Heart right ventricle (tissue), 16 donors: ENCODE measurements at regions of chr1 and their contacts with region 1.

Region 1: GRCh38 chr1:150578965-150579798 is at the start of gene MCL1:
- DNase-seq: peak; percentile 93 to 96
- ATAC-seq: peak; percentile 87 to 95 (median 90)
- H3K4me3 ChIP-seq: peak within 1 kb of the TSS; percentile 82 to 99 (median 96)
- H3K27ac ChIP-seq: peak within 1 kb of the TSS; percentile 91 to 100 (median 100)
- H3K4me1 ChIP-seq: peaks cover 0 to 46% (median 30%) of the 10 kb centered on the region in 9 donors
- H3K27me3 ChIP-seq: no peaks in the 10 kb centered on the region
- CTCF ChIP-seq: peak in 2 of 9 donors; percentile 16 to 19
- total RNA-seq, gene MCL1: 76.4 to 155 (median 122) TPM

Region 2: DNA sequence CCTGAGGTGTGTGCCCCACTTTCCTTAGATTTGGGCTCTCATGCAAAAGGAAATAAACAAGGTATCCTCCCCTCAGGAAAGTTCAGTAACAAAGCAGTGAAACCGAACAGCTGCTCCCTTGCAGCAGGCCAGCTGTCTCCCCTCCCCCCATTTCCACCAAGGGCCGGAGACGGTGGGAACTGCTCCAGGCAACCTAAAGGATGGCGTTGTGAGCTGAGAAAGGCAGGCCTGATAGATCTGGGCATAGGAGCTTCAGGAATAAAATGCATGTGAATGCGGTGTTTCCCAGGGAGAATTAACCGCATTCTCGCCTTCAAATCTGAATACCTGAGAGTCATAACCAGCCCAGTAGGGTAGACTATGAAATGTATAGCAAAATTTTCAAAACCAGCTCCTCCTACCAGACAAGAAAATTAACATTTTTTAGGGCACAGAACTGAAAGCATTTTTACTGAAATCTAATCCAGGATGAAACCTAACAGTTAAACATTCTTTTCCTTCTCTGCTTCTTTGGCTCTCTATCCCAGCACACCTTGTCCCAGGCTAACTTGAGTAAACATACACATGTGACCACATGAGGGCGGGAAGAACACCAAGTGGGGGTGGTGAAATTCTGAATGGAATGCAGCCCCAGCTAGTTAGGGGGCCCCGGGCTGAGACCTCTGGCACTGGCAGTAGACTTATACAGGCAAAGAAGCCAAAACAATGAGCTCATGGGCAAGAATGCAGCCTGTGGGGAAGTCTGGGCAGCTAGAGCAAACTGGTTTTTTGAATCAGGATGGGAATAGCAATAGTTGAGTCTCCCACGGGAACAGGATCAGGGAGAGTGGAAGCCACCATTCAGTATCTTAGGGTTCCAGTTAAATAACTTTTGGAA is 11.2 kb before region 1 on chr1:
- intact Hi-C with region 1: loop called in 1 of 10 experiments (anchors 1 kb)
- DNase-seq: peak in 1 of 2 donors; percentile 74
- ATAC-seq: peak; percentile 41 to 92 (median 62)
- H3K4me3 ChIP-seq: peak overlapping the region in 9 of 10 donors; percentile 12 to 47 (median 34)
- H3K27ac ChIP-seq: peak overlapping the region; percentile 78 to 100 (median 99)
- H3K4me1 ChIP-seq: peaks cover 48 to 100% (median 99%) of the 10 kb centered on the region in 9 donors
- H3K27me3 ChIP-seq: no peaks in the 10 kb centered on the region
- CTCF ChIP-seq: peak in 1 of 9 donors; percentile 19

Region 3: GRCh38 chr1:150603711-150604110 is 24.5 kb after region 1 on chr1:
- intact Hi-C with region 1: loop called in 1 of 10 experiments (anchors 2 kb)
- DNase-seq: no peak
- ATAC-seq: no peak
- H3K4me3 ChIP-seq: no peak overlapping the region
- H3K27ac ChIP-seq: peak overlapping the region in 8 of 10 donors; percentile 49 to 90 (median 82)
- H3K4me1 ChIP-seq: peaks cover 0 to 26% (median 13%) of the 10 kb centered on the region in 9 donors
- H3K27me3 ChIP-seq: no peaks in the 10 kb centered on the region
- CTCF ChIP-seq: no peak

Region 4: DNA sequence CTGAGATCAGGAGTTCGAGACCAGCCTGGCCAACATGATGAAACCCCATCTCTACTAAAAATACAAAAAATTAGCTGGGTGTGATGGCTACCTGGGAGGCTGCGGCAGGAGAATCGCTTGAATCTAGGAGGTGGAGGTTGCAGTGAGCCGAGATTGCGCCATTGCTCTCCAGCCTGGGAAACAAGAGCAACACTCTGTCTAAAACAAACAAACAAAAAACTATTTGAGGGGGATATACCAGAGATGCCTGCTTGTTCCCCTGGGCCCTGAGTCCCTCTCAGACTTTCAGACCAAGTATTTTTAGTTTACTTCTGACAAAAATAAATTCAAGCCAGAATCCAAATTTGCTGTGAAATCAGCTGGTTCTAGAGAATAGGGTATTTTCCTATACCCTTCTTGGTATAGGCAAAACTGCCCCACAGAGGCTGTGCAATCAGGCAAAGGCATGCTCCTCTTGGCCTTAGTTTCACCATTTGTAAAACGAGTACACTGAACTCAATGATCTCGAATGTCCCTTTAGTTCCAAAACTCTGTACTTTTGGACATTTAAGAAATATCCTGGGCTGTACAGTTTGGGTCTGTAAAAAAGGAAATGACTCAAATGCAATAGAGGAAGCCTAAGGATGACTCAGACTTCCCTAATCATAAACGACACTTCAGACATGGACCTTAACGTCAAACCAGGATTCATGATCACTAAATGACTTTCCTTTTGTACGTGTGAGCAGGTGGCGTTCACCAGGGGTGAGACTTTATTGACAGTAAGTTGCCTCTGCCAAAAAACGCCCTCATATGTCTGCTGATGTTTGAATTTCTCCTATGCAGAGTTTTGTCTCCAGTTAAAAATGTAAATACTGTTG is 34.1 kb after region 1 on chr1:
- intact Hi-C with region 1: loop called in 5 of 10 experiments (anchors 2 to 5 kb)
- DNase-seq: peak in 1 of 2 donors; percentile 71
- ATAC-seq: peak; percentile 59 to 85 (median 75)
- H3K4me3 ChIP-seq: peak overlapping the region in 4 of 10 donors; percentile 3 to 34 (median 18)
- H3K27ac ChIP-seq: peak overlapping the region; percentile 68 to 96 (median 84)
- H3K4me1 ChIP-seq: peaks cover 9 to 80% (median 53%) of the 10 kb centered on the region in 9 donors
- H3K27me3 ChIP-seq: no peaks in the 10 kb centered on the region
- CTCF ChIP-seq: no peak

Region 5: DNA sequence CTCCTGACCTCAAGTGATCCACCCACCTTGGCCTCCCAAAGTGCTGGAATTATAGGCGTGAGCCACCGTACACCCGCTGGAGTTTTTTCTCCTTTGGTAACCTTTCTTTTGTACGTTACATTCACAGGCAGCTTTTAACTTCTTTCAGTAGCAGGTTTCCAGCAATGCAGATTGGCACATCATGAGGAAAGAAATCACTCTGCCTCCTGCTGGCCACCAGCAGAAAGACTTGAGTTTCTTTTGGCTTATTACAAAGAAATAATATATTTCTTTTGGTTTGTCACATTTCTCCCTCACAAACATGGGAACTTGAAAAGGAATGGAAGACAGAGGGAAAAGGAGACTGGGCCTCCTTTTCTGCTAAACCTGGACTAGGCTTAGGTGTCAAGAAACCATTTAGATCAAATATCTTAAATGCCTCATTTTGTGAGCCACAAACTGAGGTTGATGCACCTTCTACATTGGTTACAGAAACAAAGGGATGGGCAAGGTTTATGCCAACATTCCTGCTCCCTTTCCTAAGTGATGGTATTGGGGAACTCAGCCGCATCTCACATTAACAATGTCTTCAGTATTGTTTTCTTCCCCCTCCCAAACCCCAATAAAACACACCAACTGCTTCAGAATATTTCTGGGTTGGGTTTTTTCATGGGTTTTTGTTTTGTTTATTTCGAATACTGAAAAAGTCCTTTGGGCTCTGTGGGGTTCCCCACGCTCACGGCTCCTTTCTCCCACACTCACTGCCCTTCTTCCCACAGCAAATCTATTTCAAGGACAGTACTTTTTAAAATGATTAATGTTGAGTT is 42.5 kb after region 1 on chr1:
- intact Hi-C with region 1: loop called in 5 of 10 experiments (anchors 2 to 5 kb)
- DNase-seq: peak in 1 of 2 donors; percentile 57
- ATAC-seq: peak in 4 of 8 donors; percentile 27 to 53 (median 38)
- H3K4me3 ChIP-seq: no peak overlapping the region
- H3K27ac ChIP-seq: peak overlapping the region; percentile 32 to 87 (median 76)
- H3K4me1 ChIP-seq: peaks cover 8 to 57% (median 49%) of the 10 kb centered on the region in 9 donors
- H3K27me3 ChIP-seq: no peaks in the 10 kb centered on the region
- CTCF ChIP-seq: peak; percentile 51 to 80 (median 71)

Region 6: GRCh38 chr1:150629115-150629928 is 50.1 kb after region 1 on chr1 and contains the start of gene ENSA:
- intact Hi-C with region 1: loop called in 2 of 10 experiments (anchors 2 to 5 kb)
- DNase-seq: peak; percentile 95 to 99
- ATAC-seq: peak; percentile 96 to 98 (median 97)
- H3K4me3 ChIP-seq: peak within 1 kb of the TSS; percentile 48 to 81 (median 66)
- H3K27ac ChIP-seq: peak within 1 kb of the TSS; percentile 83 to 100 (median 96)
- H3K4me1 ChIP-seq: peaks cover 3 to 54% (median 24%) of the 10 kb centered on the region in 9 donors
- H3K27me3 ChIP-seq: no peaks in the 10 kb centered on the region
- CTCF ChIP-seq: no peak
- total RNA-seq, gene ENSA: 115 to 148 (median 132) TPM